ENCODE measurements at regions of chr4 and their contacts with region 1.

Region 1: DNA sequence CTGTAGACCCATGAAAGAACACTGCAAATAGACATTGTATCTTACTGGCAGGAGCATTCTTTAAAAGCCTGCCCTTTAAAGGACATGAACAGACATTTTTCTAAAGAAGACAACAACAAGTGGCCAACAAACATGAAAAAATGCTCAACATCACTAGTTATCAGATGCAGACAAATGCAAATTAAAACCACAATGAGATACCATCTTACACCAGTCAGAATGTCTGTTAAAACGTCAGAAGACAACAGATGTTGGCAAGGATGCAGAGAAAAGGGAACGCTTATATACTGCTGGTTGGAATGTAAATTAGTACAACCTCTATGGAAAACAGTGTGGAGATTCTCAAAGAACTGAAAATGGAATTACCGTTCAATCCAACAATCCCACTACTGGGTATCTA is 77.2 kb downstream of the ATP10D start:
- DNase-seq: no peak
- H3K4me3 ChIP-seq: no peak overlapping the region
- H3K27ac ChIP-seq: no peak overlapping the region
- H3K4me1 ChIP-seq: peaks cover 0 to 7% of the 10 kb centered on the region in 2 donors
- H3K27me3 ChIP-seq: no peaks in the 10 kb centered on the region
- CTCF ChIP-seq: no peak
- POLR2A ChIP-seq: no peak

Region 2: DNA sequence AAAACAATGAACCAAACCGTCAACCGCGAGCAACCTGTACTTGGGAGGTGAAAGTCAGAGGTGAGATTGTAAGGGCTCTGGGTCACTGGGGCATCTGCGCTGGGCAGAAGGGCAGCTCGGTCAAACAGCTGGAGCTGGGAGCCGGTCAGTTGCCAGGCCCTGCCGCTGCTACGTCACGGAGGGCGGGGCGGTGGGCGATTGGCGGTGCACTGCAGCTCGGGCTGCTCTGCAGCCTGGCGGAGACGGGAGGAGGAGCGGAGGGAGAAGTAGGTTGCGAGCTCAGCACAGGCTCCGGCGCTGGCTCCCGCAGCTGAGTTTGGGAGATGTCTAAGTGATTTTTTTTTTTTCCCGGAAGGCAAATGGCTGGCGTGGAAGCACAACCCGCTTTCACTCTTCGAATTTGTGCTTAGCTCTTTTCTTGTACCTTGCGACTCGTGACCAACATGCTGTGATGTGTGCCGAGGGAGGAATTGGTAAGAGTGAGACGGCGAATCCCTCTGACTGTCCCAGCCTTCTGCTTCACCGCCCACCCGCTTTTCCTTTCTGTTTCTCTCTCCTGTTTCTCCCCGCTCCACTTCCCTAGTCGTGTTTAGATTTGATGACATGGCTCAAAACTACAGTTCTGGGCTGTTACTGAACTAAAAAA is 77.1 kb before region 1 on chr4 and contains the start of gene ATP10D:
- intact Hi-C with region 1: loop called (anchors 10 kb)
- DNase-seq: peak; percentile 96 to 98 (median 97)
- H3K4me3 ChIP-seq: peak within 1 kb of the TSS in 3 of 4 donors; percentile 15 to 61 (median 53)
- H3K27ac ChIP-seq: peak within 1 kb of the TSS; percentile 50 to 97 (median 93)
- H3K4me1 ChIP-seq: peaks cover 6 to 10% of the 10 kb centered on the region in 2 donors
- H3K27me3 ChIP-seq: no peaks in the 10 kb centered on the region
- CTCF ChIP-seq: peak in 3 of 6 experiments; percentile 36 to 47 (median 40)
- POLR2A ChIP-seq: peak; percentile 84 to 97
- total RNA-seq, gene ATP10D: 13.6 to 70.0 (median 39.2) TPM

Region 3: DNA sequence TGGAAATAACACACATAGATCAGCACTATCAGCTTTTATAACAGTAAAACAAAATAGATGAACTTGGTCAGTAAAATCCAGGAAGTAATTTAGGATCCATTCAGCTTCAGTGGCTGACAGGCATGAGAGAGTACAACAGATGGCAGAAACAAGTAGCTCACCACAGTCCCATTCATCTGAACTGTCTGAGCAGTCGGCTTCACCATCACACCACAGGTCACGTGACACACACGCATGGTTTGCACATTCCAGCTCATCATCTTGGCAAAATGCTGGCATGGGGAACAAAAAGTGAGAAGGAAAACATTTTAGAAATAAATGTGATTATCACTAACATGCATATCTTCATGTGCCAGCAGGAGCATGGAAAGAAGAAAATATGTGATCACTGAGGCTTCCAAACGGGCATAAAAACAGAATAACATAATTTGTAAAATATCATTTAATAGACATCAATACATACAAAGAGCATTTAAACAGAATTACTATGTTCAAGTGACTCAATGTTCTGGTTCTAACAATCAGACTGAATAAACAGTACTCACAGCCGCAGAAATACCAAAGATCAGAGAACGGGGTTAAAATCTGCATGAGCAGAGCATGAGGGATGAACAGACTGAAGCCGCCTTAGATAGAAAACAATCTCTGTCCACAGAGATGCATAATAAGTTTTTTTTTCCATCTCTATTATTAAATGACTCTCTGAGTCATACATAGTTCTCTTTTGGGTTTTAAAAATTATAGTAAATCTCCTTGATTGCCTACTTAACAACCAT is 80.9 kb after region 1 on chr4:
- intact Hi-C with region 1: no loop called
- DNase-seq: no peak
- H3K4me3 ChIP-seq: no peak overlapping the region
- H3K27ac ChIP-seq: no peak overlapping the region
- H3K4me1 ChIP-seq: no peaks in the 10 kb centered on the region
- H3K27me3 ChIP-seq: no peaks in the 10 kb centered on the region
- CTCF ChIP-seq: no peak
- POLR2A ChIP-seq: no peak

Region 4: GRCh38 chr4:47801481-47802002 is 239.2 kb after region 1 on chr4:
- intact Hi-C with region 1: no loop called
- DNase-seq: no peak
- H3K4me3 ChIP-seq: no peak overlapping the region
- H3K27ac ChIP-seq: no peak overlapping the region
- H3K4me1 ChIP-seq: no peaks in the 10 kb centered on the region
- H3K27me3 ChIP-seq: no peaks in the 10 kb centered on the region
- CTCF ChIP-seq: no peak
- POLR2A ChIP-seq: no peak

Region 5: GRCh38 chr4:47891928-47892327 is 329.6 kb after region 1 on chr4:
- intact Hi-C with region 1: no loop called
- DNase-seq: no peak
- H3K4me3 ChIP-seq: no peak overlapping the region
- H3K27ac ChIP-seq: no peak overlapping the region
- H3K4me1 ChIP-seq: no peaks in the 10 kb centered on the region
- H3K27me3 ChIP-seq: no peaks in the 10 kb centered on the region
- CTCF ChIP-seq: no peak
- POLR2A ChIP-seq: no peak

Measured in adrenal gland (tissue), 19 donors.